ENCODE measurements at regions of chr20 and their contacts with region 1.

Region 1: DNA sequence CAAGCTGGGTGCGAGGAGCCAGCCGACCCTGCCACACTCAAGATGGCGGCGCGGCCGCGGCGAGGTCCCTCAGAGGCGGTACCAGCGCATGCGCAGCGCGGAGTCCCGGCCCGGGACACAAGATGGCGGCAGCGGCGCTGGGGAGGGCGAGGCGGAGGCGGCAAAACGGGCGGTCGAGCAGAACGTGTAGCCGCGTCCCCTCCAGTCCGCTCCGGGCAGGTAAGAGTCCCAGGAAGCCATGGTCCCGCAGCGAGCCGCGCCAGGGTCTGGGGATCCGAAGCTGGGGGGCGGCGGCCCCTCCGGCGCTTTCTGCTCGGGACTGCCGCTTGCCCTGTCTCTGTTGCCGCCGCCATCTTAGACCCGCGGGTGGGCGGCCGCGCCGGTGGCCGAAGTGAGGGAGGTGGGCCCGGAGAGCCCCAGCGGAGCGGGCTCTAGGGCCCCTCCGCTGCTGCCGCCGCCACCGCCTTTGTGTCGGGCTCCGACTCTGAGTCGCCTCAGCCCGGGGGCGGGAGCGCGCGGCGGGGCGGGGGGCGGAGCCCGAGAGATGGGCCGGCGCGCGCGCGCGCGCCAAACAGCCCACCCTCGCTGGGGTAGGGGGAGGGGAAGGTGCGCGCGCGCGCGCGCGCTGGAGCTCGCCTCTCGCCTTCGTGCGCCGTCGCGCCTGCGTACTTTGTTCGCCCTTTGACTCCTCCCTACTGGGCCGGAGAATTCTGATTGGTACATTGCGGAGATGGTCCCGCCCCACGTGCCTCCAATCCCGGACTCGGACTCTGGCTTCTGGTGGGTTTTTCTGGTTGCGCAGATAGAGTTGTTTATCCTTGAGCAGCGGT is at the start of gene PCIF1:
- DNase-seq: peak; percentile 100
- H3K4me3 ChIP-seq: peak within 1 kb of the TSS; percentile 95
- H3K4me3 Mint-ChIP-seq: peak within 1 kb of the TSS; percentile 100
- H3K27ac Mint-ChIP-seq: peak within 1 kb of the TSS; percentile 99
- H3K4me1 ChIP-seq: peaks cover 26% of the 10 kb centered on the region
- H3K4me1 Mint-ChIP-seq: peaks cover 13% of the 10 kb centered on the region
- H3K27me3 ChIP-seq: no peaks in the 10 kb centered on the region
- H3K27me3 Mint-ChIP-seq: no peaks in the 10 kb centered on the region
- CTCF ChIP-seq: no peak
- total RNA-seq, gene PCIF1: 66.5 and 75.9 TPM in 2 replicates

Region 2: GRCh38 chr20:45362804-45363610 is 571.8 kb before region 1 on chr20 and contains the start of gene SYS1:
- CTCF ChIA-PET with region 1: interaction called, 3 read pairs
- POLR2A ChIA-PET with region 1: interaction called, 11 read pairs
- intact Hi-C with region 1: no loop called
- DNase-seq: peak; percentile 100
- H3K4me3 ChIP-seq: peak within 1 kb of the TSS; percentile 93
- H3K4me3 Mint-ChIP-seq: peak within 1 kb of the TSS; percentile 87
- H3K27ac Mint-ChIP-seq: peak within 1 kb of the TSS; percentile 91
- H3K4me1 ChIP-seq: peaks cover 46% of the 10 kb centered on the region
- H3K4me1 Mint-ChIP-seq: peaks cover 46% of the 10 kb centered on the region
- H3K27me3 ChIP-seq: no peaks in the 10 kb centered on the region
- H3K27me3 Mint-ChIP-seq: no peaks in the 10 kb centered on the region
- CTCF ChIP-seq: peak; percentile 98
- total RNA-seq, gene SYS1: 62.1 and 67.1 TPM in 2 replicates

Region 3: DNA sequence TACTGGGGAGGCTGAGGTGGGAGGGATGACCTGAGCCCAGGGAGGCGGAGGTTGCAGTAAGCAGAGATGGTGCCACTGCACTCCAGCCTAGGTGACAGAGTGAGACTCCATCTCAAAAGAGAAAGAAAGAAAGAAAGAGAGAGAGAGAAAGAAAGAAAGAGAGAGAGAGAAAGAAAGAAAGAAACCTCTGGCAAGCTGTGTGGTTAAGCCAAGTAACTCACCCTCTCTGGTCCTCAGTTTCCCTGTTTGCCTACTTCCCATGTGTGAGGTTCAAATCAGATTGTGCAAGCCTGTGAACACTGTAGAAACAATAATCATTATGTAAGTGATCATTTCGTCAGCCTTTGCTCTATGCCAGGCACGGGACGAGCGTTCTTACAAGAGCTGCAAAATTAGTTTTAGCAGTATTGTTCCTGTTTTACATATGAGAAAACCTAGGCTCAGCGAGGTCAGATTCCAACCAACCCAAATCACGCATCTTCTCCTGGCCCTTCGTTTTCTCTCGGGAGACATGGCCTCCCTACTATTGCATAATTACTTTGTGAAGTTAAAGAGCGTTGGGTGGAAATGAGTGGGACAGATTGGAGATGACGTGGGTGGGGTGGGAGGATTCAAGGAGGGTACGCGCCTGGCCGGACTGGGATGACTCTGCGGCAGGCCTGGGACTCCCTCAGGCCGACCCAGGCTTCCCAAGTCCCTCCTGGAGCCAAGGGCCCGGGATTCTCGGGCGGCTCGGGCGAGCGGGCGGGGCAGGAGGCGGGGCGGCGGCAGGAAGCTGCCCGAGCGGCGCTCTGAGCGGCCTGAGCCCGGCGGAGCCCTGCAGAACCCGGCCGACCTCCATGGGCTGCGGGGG is 101.5 kb before region 1 on chr20 and contains the start of gene SNX21:
- CTCF ChIA-PET with region 1: no interaction called
- POLR2A ChIA-PET with region 1: interaction called, 12 read pairs
- intact Hi-C with region 1: no loop called
- DNase-seq: peak; percentile 94 to 95
- H3K4me3 ChIP-seq: peak within 1 kb of the TSS; percentile 86
- H3K4me3 Mint-ChIP-seq: peak within 1 kb of the TSS; percentile 71
- H3K27ac Mint-ChIP-seq: peak within 1 kb of the TSS; percentile 53
- H3K4me1 ChIP-seq: peaks cover 13% of the 10 kb centered on the region
- H3K4me1 Mint-ChIP-seq: peaks cover 15% of the 10 kb centered on the region
- H3K27me3 ChIP-seq: no peaks in the 10 kb centered on the region
- H3K27me3 Mint-ChIP-seq: no peaks in the 10 kb centered on the region
- CTCF ChIP-seq: no peak
- total RNA-seq, gene SNX21: 14.1 and 15.6 TPM in 2 replicates

Region 4: GRCh38 chr20:45867819-45868176 is 67.0 kb before region 1 on chr20:
- CTCF ChIA-PET with region 1: interaction called, 3 read pairs
- POLR2A ChIA-PET with region 1: interaction called, 12 read pairs
- intact Hi-C with region 1: no loop called
- DNase-seq: no peak
- H3K4me3 ChIP-seq: no peak overlapping the region
- H3K4me3 Mint-ChIP-seq: no peak overlapping the region
- H3K27ac Mint-ChIP-seq: no peak overlapping the region
- H3K4me1 ChIP-seq: peaks cover 16% of the 10 kb centered on the region
- H3K4me1 Mint-ChIP-seq: peaks cover 18% of the 10 kb centered on the region
- H3K27me3 ChIP-seq: no peaks in the 10 kb centered on the region
- H3K27me3 Mint-ChIP-seq: no peaks in the 10 kb centered on the region
- CTCF ChIP-seq: no peak

Region 5: DNA sequence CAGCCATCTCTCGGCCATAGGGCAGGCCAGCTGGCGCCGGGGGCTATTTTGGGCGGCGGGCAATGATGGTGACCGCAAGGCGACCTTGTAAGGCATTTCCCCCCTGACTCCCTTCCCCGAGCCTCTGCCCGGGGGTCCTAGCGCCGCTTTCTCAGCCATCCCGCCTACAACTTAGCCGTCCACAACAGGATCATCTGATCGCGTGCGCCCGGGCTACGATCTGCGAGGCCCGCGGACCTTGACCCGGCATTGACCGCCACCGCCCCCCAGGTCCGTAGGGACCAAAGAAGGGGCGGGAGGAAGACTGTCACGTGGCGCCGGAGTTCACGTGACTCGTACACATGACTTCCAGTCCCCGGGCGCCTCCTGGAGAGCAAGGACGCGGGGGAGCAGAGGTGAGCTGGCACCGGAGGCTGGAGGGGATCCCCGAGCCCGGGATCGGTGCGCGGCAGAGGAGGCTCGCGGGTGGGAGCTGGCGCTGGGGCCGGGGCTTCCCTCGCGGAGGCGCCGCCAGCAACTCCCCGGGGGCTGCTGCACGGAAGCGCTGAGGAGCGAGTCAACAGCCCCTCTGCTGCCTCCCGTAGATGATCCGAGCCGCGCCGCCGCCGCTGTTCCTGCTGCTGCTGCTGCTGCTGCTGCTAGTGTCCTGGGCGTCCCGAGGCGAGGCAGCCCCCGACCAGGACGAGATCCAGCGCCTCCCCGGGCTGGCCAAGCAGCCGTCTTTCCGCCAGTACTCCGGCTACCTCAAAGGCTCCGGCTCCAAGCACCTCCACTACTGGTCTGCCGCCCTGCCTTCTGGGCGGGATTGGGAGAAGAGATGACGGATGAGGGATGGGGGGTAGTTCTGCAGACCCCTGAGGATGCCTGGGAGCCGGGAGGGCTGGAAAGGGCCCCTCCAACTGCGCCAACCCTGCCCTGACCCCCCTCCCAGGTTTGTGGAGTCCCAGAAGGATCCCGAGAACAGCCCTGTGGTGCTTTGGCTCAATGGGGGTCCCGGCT is 43.5 kb before region 1 on chr20 and contains the starts of genes CTSA and NEURL2:
- CTCF ChIA-PET with region 1: interaction called, 49 read pairs
- POLR2A ChIA-PET with region 1: interaction called, 53 read pairs
- intact Hi-C with region 1: loop called (anchors 1 kb)
- DNase-seq: peak; percentile 99
- H3K4me3 ChIP-seq: peak within 1 kb of the TSS; percentile 94
- H3K4me3 Mint-ChIP-seq: peak within 1 kb of the TSS; percentile 95
- H3K27ac Mint-ChIP-seq: peak within 1 kb of the TSS; percentile 95
- H3K4me1 ChIP-seq: peaks cover 8% of the 10 kb centered on the region
- H3K4me1 Mint-ChIP-seq: peaks cover 36% of the 10 kb centered on the region
- H3K27me3 ChIP-seq: no peaks in the 10 kb centered on the region
- H3K27me3 Mint-ChIP-seq: no peaks in the 10 kb centered on the region
- CTCF ChIP-seq: peak; percentile 10 to 34
- total RNA-seq, gene CTSA: 282 and 294 TPM in 2 replicates
- total RNA-seq, gene NEURL2: 12.6 TPM in 2 replicates

Region 6: GRCh38 chr20:45911486-45912343 is 23.1 kb before region 1 on chr20 and contains the start of gene PLTP:
- CTCF ChIA-PET with region 1: interaction called, 3 read pairs
- POLR2A ChIA-PET with region 1: interaction called, 4 read pairs
- intact Hi-C with region 1: loop called (anchors 2 kb)
- DNase-seq: peak; percentile 73 to 78
- H3K4me3 ChIP-seq: peak within 1 kb of the TSS; percentile 42
- H3K4me3 Mint-ChIP-seq: peak within 1 kb of the TSS; percentile 72
- H3K27ac Mint-ChIP-seq: peak within 1 kb of the TSS; percentile 37
- H3K4me1 ChIP-seq: peaks cover 12% of the 10 kb centered on the region
- H3K4me1 Mint-ChIP-seq: peaks cover 7% of the 10 kb centered on the region
- H3K27me3 ChIP-seq: no peaks in the 10 kb centered on the region
- H3K27me3 Mint-ChIP-seq: no peaks in the 10 kb centered on the region
- CTCF ChIP-seq: no peak
- total RNA-seq, gene PLTP: 39.6 and 42.6 TPM in 2 replicates

Region 7: DNA sequence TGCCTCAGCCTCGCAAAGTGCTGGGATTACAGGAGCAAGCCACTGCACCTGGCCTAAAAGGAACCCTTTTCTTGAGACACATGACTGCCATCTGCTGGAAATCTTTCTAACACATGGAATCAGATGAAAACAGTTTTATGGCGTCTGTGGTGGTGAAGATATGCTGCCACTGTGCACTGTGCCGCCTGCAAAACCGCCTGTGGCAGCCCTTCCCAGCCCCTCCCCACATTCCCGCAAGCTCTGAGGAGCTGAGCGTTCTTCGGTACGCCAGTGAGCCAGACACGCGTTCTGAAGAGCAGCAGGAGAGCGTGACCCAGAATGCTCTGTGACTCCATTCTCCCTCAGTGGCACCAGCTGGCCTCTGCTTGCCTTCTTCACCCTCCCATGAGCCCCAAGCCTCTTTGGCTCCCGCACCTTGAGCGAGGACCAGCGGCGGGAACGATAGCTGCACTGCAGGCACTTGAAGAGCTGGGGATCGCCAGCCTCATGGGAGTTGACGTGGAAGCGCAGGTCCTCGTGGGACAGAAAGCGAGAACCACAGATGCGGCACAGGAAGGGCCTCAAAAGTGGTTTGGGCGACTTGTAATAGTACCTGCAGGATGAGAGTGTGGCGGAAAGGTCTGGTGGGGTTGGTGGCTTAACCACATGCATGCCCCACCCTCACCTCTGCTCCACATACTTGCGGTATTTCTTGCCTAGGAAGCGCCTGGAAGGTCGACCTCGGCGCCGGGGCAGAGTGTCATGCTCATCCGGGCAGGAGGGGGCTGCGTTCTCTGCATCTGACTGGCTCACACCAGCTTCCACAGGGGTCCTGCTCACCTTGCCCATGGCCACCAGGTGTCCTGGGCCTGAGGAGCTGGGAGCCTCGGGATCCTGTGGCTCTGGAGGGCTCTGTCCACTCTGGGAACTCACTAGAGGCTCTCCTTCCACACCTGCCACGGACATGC is 28.5 kb after region 1 on chr20:
- CTCF ChIA-PET with region 1: interaction called, 63 read pairs
- POLR2A ChIA-PET with region 1: interaction called, 4 read pairs
- intact Hi-C with region 1: loop called (anchors 1 kb)
- DNase-seq: peak; percentile 77 to 78
- H3K4me3 ChIP-seq: no peak overlapping the region
- H3K4me3 Mint-ChIP-seq: no peak overlapping the region
- H3K27ac Mint-ChIP-seq: no peak overlapping the region
- H3K4me1 ChIP-seq: no peaks in the 10 kb centered on the region
- H3K4me1 Mint-ChIP-seq: no peaks in the 10 kb centered on the region
- H3K27me3 ChIP-seq: no peaks in the 10 kb centered on the region
- H3K27me3 Mint-ChIP-seq: no peaks in the 10 kb centered on the region
- CTCF ChIP-seq: peak; percentile 70 to 88

Region 8: GRCh38 chr20:46073443-46073842 is 138.6 kb after region 1 on chr20:
- CTCF ChIA-PET with region 1: no interaction called
- POLR2A ChIA-PET with region 1: no interaction called
- intact Hi-C with region 1: no loop called
- DNase-seq: no peak
- H3K4me3 ChIP-seq: no peak overlapping the region
- H3K4me3 Mint-ChIP-seq: no peak overlapping the region
- H3K27ac Mint-ChIP-seq: no peak overlapping the region
- H3K4me1 ChIP-seq: peaks cover 9% of the 10 kb centered on the region; the same call in 1 of the 2 replicates
- H3K4me1 Mint-ChIP-seq: no peaks in the 10 kb centered on the region
- H3K27me3 ChIP-seq: no peaks in the 10 kb centered on the region
- H3K27me3 Mint-ChIP-seq: no peaks in the 10 kb centered on the region
- CTCF ChIP-seq: no peak

Region 9: DNA sequence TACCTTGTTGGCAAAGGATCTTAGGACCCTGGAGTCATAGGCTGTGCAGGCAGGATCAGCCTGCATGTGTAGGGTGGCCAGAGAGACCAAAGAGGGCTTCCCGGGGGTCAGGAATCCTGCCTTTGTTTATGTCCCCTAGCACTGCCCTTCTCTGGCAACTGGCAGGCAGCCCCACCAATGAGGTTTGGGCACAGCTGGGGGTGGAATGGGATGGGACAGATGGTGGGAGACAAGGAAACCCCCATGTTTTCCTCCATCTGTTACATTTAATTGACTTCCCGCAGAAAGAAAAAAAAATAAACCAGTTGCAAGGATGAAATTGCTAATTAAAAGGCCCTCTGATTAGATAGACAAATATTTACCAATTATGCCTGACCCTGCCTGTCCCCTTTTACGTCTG is 210.9 kb after region 1 on chr20:
- CTCF ChIA-PET with region 1: no interaction called
- POLR2A ChIA-PET with region 1: no interaction called
- intact Hi-C with region 1: no loop called
- DNase-seq: no peak
- H3K4me3 ChIP-seq: no peak overlapping the region
- H3K4me3 Mint-ChIP-seq: no peak overlapping the region
- H3K27ac Mint-ChIP-seq: no peak overlapping the region
- H3K4me1 ChIP-seq: no peaks in the 10 kb centered on the region
- H3K4me1 Mint-ChIP-seq: no peaks in the 10 kb centered on the region
- H3K27me3 ChIP-seq: peaks cover 3% of the 10 kb centered on the region; the same call in 1 of the 2 replicates
- H3K27me3 Mint-ChIP-seq: peaks cover 30% of the 10 kb centered on the region
- CTCF ChIP-seq: no peak